ENCODE measurements at regions of chr13 and their contacts with region 1.

Region 1: GRCh38 chr13:21638319-21639282 is 32.3 kb upstream of the FGF9 start:
- DNase-seq: no peak
- H3K4me3 ChIP-seq: no peak overlapping the region
- CTCF ChIP-seq: peak; percentile 54

Region 2: GRCh38 chr13:21616880-21617279 is 21.7 kb before region 1 on chr13:
- CTCF ChIA-PET with region 1: interaction called, 33 read pairs
- POLR2A ChIA-PET with region 1: no interaction called
- DNase-seq: no peak
- H3K4me3 ChIP-seq: no peak overlapping the region
- CTCF ChIP-seq: no peak

Region 3: DNA sequence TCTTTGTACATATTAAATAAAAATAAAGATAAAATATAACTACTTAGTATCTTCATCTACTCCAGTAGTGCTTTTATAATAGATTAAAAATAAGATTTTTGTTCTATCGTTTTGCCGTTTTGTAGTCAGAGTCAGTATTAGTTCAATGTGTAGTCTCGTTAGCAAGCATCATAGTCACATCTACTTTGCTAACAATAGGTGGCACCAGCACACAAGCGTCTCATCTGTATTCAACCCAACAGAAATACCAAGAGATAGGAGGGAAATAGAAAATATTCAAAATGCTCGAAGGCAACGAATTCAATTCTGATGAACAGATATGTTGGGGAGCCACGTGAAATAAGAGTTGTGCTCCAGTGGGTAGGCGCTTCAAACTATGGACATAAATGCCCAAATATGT is 13.2 kb before region 1 on chr13:
- CTCF ChIA-PET with region 1: interaction called, 15 read pairs
- POLR2A ChIA-PET with region 1: no interaction called
- DNase-seq: no peak
- H3K4me3 ChIP-seq: no peak overlapping the region
- CTCF ChIP-seq: no peak

Region 4: GRCh38 chr13:23321535-23322241 is 1683.1 kb after region 1 on chr13:
- CTCF ChIA-PET with region 1: interaction called, 48 read pairs
- POLR2A ChIA-PET with region 1: no interaction called
- DNase-seq: peak; percentile 76
- H3K4me3 ChIP-seq: peak overlapping the region; percentile 46
- CTCF ChIP-seq: no peak

Measured in AG04449 (cell line).